ENCODE measurements at regions of chr4 and their contacts with region 1.

Region 1: GRCh38 chr4:176277162-176277904 is 8.3 kb upstream of the ASB5 start:
- DNase-seq: peak; percentile 47 to 48
- H3K4me3 ChIP-seq: no peak overlapping the region
- H3K27ac ChIP-seq: no peak overlapping the region
- H3K4me1 ChIP-seq: peaks cover 13% of the 10 kb centered on the region
- H3K27me3 ChIP-seq: no peaks in the 10 kb centered on the region
- CTCF ChIP-seq: peak; percentile 52

Region 2: GRCh38 chr4:175947117-175947722 is 330.1 kb before region 1 on chr4:
- CTCF ChIA-PET with region 1: no interaction called
- POLR2A ChIA-PET with region 1: no interaction called
- intact Hi-C with region 1: loop called (anchors 2 kb)
- DNase-seq: no peak
- H3K4me3 ChIP-seq: no peak overlapping the region
- H3K27ac ChIP-seq: no peak overlapping the region
- H3K4me1 ChIP-seq: no peaks in the 10 kb centered on the region
- H3K27me3 ChIP-seq: no peaks in the 10 kb centered on the region
- CTCF ChIP-seq: peak; percentile 70

Region 3: DNA sequence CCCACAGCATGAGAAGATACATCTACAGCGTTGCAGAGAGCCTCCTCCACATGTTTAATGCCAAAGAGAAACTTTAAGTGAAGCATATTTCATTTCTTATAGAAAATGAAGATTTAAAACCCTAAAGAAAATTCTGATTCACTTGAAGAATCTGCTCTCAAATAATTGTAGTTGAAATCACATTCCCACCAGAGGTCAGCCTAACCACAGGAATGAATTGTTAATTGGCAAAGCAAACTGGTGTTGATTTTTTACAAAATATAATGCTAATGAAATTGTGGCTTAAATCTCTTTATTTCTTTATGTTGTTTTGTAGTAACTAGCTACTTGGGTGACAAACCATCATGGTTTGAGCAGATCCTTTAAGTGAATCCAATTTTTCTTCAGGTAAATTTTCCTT is 242.8 kb before region 1 on chr4:
- CTCF ChIA-PET with region 1: no interaction called
- POLR2A ChIA-PET with region 1: no interaction called
- intact Hi-C with region 1: loop called (anchors 1 kb)
- DNase-seq: no peak
- H3K4me3 ChIP-seq: no peak overlapping the region
- H3K27ac ChIP-seq: no peak overlapping the region
- H3K4me1 ChIP-seq: no peaks in the 10 kb centered on the region
- H3K27me3 ChIP-seq: no peaks in the 10 kb centered on the region
- CTCF ChIP-seq: peak; percentile 56

Region 4: GRCh38 chr4:176150356-176150682 is 127.0 kb before region 1 on chr4:
- CTCF ChIA-PET with region 1: no interaction called
- POLR2A ChIA-PET with region 1: no interaction called
- intact Hi-C with region 1: loop called (anchors 1 kb)
- DNase-seq: no peak
- H3K4me3 ChIP-seq: no peak overlapping the region
- H3K27ac ChIP-seq: no peak overlapping the region
- H3K4me1 ChIP-seq: no peaks in the 10 kb centered on the region
- H3K27me3 ChIP-seq: no peaks in the 10 kb centered on the region
- CTCF ChIP-seq: peak; percentile 57

Measured in PC-9 (cell line).